Caco-2 (cell line): ENCODE measurements at regions of chr16 and their contacts with region 1.

Region 1: DNA sequence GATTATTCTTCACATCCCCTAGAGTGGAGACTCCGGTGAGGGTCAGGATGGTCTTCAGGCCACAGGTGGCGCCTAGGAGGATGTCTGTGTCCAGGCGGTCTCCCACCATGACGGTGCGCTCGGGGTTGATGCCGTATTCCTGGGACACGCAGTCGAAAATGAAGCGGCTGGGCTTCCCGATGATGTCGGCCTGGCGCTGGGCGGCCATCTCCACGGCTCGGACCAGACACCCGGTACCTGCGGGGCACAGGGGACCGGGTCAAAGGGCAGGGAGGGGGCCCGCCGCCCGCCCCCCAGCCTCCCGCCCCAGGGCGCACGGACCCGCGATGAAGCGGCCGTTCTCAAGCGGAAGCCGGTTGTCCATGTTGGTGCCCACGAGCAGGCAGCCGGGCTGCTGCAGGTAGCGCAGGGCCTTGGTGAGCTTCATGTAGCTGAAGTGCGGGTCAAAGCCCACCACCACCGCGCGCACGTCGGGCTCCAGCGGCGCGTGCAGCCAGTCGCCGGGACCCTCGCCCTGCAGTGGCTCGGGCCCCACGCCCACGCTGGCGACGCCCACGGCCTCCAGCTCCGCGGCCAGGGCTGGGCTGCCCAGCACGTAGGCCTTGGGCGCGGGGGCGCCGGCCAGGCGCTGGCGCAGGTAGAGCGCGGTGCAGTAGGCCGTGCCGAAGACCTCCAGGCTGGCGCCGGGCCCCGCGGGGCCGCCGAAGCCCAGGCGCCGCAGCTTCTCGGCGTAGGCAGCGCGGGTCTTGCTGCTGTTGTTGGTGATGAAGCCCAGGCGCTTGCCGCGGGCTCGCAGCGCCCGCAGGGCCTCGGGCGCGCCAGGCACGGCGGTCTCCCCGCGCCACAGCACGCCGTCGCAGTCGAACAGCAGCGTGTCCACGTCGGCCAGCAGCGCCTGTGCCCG is 571 bp downstream of the PGP start:
- DNase-seq: no peak
- H3K4me3 ChIP-seq: peak overlapping the region; percentile 75
- H3K4me3 Mint-ChIP-seq: peak overlapping the region; percentile 74
- H3K27ac Mint-ChIP-seq: peak overlapping the region; percentile 66
- H3K4me1 ChIP-seq: peaks cover 29% of the 10 kb centered on the region
- H3K4me1 Mint-ChIP-seq: no peaks in the 10 kb centered on the region
- H3K27me3 ChIP-seq: no peaks in the 10 kb centered on the region
- H3K27me3 Mint-ChIP-seq: no peaks in the 10 kb centered on the region
- CTCF ChIP-seq: no peak

Region 2: DNA sequence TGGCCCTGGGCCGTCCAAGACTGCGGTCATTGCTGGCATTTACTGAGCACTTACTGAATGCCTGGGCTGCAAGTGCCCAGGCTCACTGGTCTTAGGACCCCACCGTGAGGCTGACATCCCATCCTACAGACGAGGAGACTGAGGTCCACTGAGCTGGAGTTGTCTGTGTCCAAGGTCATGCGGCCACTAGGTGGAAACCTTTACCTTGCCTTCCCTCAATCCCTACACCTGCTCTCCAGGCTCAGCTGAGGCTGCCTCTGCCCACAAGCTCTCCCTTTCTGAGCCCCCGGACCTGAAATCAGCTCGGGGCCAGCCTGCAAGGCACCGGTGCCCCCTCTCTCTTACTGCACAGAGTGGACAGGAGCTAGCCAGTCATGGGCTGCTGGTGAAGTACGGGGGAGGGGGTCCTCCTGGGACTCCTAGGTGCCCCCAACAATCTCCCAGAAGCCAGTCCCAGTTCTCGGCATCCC is 19.2 kb before region 1 on chr16:
- CTCF ChIA-PET with region 1: interaction called, 10 read pairs
- POLR2A ChIA-PET with region 1: no interaction called
- intact Hi-C with region 1: no loop called
- DNase-seq: peak; percentile 70 to 73
- H3K4me3 ChIP-seq: peak overlapping the region; percentile 49
- H3K4me3 Mint-ChIP-seq: peak overlapping the region; percentile 63
- H3K27ac Mint-ChIP-seq: no peak overlapping the region
- H3K4me1 ChIP-seq: peaks cover 9% of the 10 kb centered on the region
- H3K4me1 Mint-ChIP-seq: no peaks in the 10 kb centered on the region
- H3K27me3 ChIP-seq: no peaks in the 10 kb centered on the region
- H3K27me3 Mint-ChIP-seq: no peaks in the 10 kb centered on the region
- CTCF ChIP-seq: peak in 1 of 2 experiments; percentile 49

Region 3: GRCh38 chr16:2251483-2252240 is 37.6 kb after region 1 on chr16 and contains the start of gene ECI1:
- CTCF ChIA-PET with region 1: interaction called, 7 read pairs
- POLR2A ChIA-PET with region 1: interaction called, 21 read pairs
- intact Hi-C with region 1: no loop called
- DNase-seq: peak; percentile 92 to 96
- H3K4me3 ChIP-seq: peak within 1 kb of the TSS; percentile 69
- H3K4me3 Mint-ChIP-seq: peak within 1 kb of the TSS; percentile 89
- H3K27ac Mint-ChIP-seq: peak within 1 kb of the TSS; percentile 95
- H3K4me1 ChIP-seq: peaks cover 7% of the 10 kb centered on the region
- H3K4me1 Mint-ChIP-seq: peaks cover 7% of the 10 kb centered on the region
- H3K27me3 ChIP-seq: no peaks in the 10 kb centered on the region
- H3K27me3 Mint-ChIP-seq: no peaks in the 10 kb centered on the region
- CTCF ChIP-seq: peak; percentile 60 to 69
- total RNA-seq, gene ECI1: 135 and 157 TPM in 2 replicates